ENCODE measurements at regions of chr11 and their contacts with region 1.

Region 1: GRCh38 chr11:62860835-62861563 is 19.7 kb upstream of the SLC3A2 start:
- DNase-seq: no peak
- H3K4me3 ChIP-seq: no peak overlapping the region
- H3K27me3 ChIP-seq: no peaks in the 10 kb centered on the region
- CTCF ChIP-seq: no peak

Region 2: GRCh38 chr11:62419314-62419929 is 441.6 kb before region 1 on chr11:
- CTCF ChIA-PET with region 1: no interaction called
- POLR2A ChIA-PET with region 1: no interaction called
- DNase-seq: no peak
- H3K4me3 ChIP-seq: no peak overlapping the region
- H3K27me3 ChIP-seq: no peaks in the 10 kb centered on the region; the same call in 1 of the 2 replicates
- CTCF ChIP-seq: no peak

Region 3: GRCh38 chr11:62880803-62881578 is 20.0 kb after region 1 on chr11 and contains the start of gene SLC3A2:
- CTCF ChIA-PET with region 1: interaction called, 22 read pairs
- POLR2A ChIA-PET with region 1: interaction called, 4 read pairs
- DNase-seq: peak; percentile 45
- H3K4me3 ChIP-seq: peak within 1 kb of the TSS; percentile 98
- H3K27me3 ChIP-seq: no peaks in the 10 kb centered on the region
- CTCF ChIP-seq: peak; percentile 78
- polyA plus RNA-seq, gene SLC3A2: 394 and 535 TPM in 2 replicates